GM12878 (cell line): ENCODE measurements at regions of chr10 and their contacts with region 1.

Region 1: GRCh38 chr10:31940839-31941653 is 12.4 kb upstream of the ARHGAP12 start:
- DNase-seq: no peak
- ATAC-seq: peak; percentile 42
- H3K4me3 ChIP-seq: no peak overlapping the region
- H3K27ac ChIP-seq: no peak overlapping the region
- H3K4me1 ChIP-seq: no peaks in the 10 kb centered on the region
- H3K27me3 ChIP-seq: no peaks in the 10 kb centered on the region
- CTCF ChIP-seq: no peak
- EP300 ChIP-seq: no peak
- POLR2A ChIP-seq: no peak
- RAD21 ChIP-seq: no peak

Region 2: GRCh38 chr10:31994926-31995325 is 53.9 kb after region 1 on chr10:
- CTCF ChIA-PET with region 1: no interaction called
- POLR2A ChIA-PET with region 1: no interaction called
- RAD21 ChIA-PET with region 1: no interaction called
- SMC1A ChIA-PET with region 1: no interaction called
- in situ Hi-C with region 1: no loop called
- intact Hi-C with region 1: loop called (anchors 5 kb)
- DNase-seq: no peak
- ATAC-seq: no peak
- H3K4me3 ChIP-seq: no peak overlapping the region
- H3K27ac ChIP-seq: no peak overlapping the region
- H3K4me1 ChIP-seq: no peaks in the 10 kb centered on the region
- H3K27me3 ChIP-seq: no peaks in the 10 kb centered on the region
- CTCF ChIP-seq: no peak
- EP300 ChIP-seq: no peak
- POLR2A ChIP-seq: no peak
- RAD21 ChIP-seq: no peak

Region 3: GRCh38 chr10:32065856-32066255 is 124.8 kb after region 1 on chr10:
- CTCF ChIA-PET with region 1: no interaction called
- POLR2A ChIA-PET with region 1: no interaction called
- RAD21 ChIA-PET with region 1: no interaction called
- SMC1A ChIA-PET with region 1: no interaction called
- in situ Hi-C with region 1: no loop called
- intact Hi-C with region 1: no loop called
- DNase-seq: no peak
- ATAC-seq: no peak
- H3K4me3 ChIP-seq: no peak overlapping the region
- H3K27ac ChIP-seq: no peak overlapping the region
- H3K4me1 ChIP-seq: no peaks in the 10 kb centered on the region
- H3K27me3 ChIP-seq: no peaks in the 10 kb centered on the region
- CTCF ChIP-seq: no peak
- EP300 ChIP-seq: no peak
- POLR2A ChIP-seq: no peak
- RAD21 ChIP-seq: no peak